ENCODE measurements at regions of chr9 and their contacts with region 1.

Region 1: GRCh38 chr9:21395778-21396717 is 10.8 kb upstream of the IFNA2 start:
- DNase-seq: peak; percentile 73

Region 2: DNA sequence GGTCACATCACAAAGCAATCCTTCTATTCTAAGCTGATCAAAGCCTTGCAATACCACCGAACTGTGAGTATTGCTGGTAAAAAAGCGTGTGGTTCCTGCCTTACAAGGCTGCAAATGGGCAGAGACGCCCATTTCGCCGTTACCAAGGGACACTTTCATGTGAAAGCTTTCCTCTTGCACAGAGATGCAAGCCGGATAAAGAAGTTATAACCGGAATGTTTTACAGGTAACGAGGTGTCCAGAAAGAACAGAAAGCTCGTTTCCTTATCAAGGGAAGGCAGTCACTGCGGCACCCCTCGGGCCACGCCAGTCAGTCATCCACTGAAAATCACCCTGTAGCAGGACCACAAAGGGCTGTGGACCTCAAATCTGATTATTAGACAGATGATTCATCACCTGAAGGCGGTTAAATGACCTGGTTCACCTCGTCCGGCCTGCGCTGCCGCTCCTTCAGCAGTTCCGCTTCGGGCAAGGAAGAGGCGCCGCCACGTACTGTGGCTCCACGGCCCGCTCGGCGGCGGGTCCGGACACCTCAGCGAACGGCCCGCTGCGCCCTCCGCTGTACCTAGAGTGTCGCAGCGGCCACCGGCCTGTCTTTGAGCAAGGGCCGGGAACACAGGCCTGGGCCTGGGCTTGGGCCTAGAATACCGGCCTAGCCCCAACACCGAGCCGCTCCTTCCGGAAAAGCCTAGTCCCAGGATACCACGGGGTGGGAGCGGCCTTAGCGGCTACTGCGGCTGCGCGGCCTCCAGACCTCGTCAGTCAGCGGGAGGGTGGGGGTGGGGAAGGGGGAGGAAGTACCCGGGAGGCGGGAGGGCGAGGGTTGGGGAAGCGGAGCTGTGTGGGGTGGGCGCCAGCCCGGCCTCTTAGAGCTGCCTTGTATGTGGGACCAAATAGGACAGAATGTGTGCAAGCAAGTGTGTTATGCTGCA is 61.1 kb before region 1 on chr9 and contains the start of gene KLHL9:
- CTCF ChIA-PET with region 1: interaction called, 15 read pairs
- POLR2A ChIA-PET with region 1: interaction called, 3 read pairs
- DNase-seq: peak; percentile 96

Measured in HEK293T (cell line).